ENCODE measurements at regions of chr17 and their contacts with region 1.

Region 1: DNA sequence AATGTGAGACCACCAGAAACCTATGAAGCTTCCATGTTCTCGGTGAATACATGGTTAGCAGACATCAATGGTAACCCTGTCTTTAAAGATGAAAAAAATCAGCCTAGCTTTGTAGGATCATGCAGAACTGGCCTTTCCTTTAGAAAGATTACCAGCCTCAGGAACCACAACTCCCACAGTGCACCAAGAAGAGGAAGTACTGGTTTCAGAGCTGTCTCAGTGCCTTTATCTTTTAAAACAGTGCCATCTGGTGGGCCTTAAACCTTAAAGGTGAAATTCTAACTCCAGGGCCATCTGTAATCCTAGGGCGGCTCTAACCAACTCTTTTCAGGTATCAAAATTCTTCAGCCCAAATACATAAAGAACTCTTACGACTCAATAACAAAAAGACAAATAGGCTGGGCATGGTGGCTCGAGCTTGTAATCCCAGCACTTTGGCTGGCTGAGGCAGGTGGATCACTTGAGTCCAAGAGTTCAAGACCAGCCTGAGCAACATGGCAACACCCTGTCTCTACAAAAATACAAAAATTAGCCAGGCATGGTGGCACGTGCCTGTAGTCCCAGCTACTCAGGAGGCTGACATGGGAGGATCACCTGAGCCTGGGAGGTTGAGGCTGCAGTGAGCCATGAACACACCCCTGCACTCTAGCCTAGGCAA is 5.4 kb downstream of the ATPAF2 start:
- DNase-seq: no peak
- ATAC-seq: peak; percentile 83 to 88

Region 2: DNA sequence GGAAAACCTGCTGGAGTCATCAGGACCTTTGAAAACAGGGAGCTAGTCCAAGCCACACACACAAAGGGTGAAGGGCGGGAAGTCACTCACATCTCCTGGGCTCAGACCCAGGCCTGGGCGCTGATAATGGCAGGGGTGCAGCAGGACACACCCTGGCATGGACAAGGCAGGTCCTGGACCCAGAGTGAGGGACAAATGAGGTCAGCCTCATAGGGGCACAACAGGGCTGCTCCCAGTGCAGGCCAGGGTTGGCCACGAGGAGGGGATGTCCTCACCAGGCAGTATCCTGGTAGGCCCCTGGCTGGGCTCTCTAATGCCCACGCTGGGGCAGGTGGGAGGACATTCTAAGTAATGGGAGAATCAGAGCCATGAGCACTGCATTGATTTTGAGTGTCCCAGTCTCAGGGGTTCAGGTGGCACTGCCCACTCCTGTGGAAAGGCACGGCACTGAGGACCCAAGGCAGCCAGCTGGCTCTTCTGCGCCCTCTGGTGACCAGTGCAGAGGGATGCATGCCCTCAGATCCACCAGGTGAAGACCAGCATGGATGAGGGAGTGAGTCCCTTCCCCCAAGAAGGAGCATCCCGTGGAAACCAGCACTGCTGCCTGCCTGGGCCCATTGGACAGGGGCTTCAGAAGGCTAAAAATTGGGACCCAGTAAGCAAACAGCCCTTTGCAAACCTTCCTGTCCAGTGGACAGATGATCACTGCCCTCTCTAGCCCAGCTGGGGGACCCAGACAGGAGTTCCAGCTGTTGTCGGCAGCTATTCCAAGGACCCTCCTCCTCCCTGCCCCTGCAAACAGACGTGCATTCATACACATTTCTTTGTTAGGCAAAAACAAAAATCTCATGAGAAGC is 173.4 kb before region 1 on chr17:
- intact Hi-C with region 1: no loop called
- DNase-seq: peak; percentile 73
- ATAC-seq: peak; percentile 85 to 91

Region 3: DNA sequence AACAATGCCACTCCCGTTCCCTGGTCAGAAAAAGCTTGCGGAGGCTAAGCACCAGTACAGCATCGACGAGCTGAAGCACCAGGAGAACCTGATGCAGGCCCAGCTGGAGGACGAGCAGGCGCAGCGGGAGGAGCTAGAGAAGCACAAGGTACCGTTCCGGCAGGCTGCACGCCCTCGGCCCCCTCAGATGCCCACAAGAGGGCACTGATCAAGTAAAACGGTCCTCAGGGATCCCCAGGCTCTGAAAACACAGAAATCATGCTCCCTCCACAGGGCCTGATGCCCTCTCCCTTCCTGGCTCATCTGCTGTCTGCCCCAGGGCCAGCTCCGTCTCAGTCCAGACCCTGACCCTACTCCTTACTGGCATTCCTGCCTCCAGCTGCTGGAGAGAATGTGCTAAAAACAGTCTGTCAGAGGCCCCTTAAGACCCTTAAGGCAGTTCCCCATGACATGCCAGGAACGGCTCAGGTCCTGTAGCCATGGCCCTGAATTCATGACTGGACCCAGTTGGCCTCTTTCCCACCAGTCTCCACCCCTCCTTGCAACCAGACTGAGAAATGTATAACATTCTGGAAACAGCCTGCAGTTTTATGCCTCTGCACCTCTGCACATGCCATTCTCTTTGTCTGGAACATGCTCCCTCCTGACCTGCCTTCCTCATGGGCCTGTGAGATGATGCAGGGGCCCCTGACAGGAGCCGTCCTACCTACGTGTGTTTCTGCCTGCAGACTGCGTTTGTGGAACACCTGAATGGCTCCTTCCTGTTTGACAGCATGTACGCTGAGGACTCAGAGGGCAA is 39.1 kb before region 1 on chr17:
- intact Hi-C with region 1: loop called in 1 of 2 experiments (anchors 2 kb)
- DNase-seq: no peak
- ATAC-seq: peak; percentile 38 to 80

Measured in left cardiac atrium (tissue), 4 donors.